Breast epithelium (tissue), 4 donors: ENCODE measurements at regions of chr1 and their contacts with region 1.

Region 1: GRCh38 chr1:29230553-29231378 is at the start of gene MECR:
- DNase-seq: peak; percentile 91 to 95
- H3K4me3 ChIP-seq: peak within 1 kb of the TSS; percentile 65 to 73 (median 71)
- H3K27ac ChIP-seq: peak within 1 kb of the TSS; percentile 70 to 83
- H3K4me1 ChIP-seq: peaks cover 0 to 4% of the 10 kb centered on the region in 2 donors
- H3K27me3 ChIP-seq: no peaks in the 10 kb centered on the region
- CTCF ChIP-seq: no peak
- POLR2A ChIP-seq: peak; percentile 42
- total RNA-seq, gene MECR: 21.0 to 23.3 (median 21.3) TPM

Region 2: DNA sequence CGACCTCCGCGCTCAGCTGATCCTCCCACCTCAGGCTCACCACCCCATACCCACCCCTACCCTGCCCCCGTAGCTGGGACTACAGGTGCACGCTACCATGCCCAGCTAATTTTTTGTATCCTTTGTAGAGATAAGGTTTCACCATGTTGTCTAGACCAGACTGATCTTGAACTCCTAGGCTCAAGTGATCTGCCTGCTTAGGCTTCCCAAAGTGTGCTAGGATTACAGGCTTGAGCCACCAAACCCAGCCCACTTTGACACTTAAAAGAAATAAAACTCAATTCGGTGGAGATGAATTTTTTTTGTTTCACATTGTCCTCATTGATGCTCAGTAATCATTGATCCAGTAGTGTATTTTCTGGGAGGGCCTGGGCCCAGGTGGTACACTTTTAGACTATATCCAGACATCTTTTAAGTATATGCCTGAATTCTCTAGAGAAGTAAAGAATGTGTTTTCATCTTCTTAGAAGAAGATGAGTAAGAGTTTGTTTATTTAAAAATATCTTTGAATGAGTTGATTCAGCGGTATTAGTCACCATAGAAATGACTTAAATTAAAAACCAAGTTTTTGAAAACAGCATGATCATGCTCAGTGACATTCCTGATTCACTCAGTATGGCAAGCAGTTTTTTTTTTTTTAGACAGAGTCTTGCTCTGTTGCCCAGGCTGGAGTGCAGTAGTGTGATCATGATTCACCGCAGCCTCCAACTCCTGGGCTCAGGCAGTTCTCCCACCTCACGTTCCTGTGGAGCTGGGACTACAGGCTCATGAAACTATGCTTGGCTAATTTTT is 258.6 kb before region 1 on chr1:
- intact Hi-C with region 1: no loop called
- DNase-seq: no peak
- H3K4me3 ChIP-seq: no peak overlapping the region
- H3K27ac ChIP-seq: peak overlapping the region; percentile 17 to 56
- H3K4me1 ChIP-seq: no peaks in the 10 kb centered on the region
- H3K27me3 ChIP-seq: no peaks in the 10 kb centered on the region
- CTCF ChIP-seq: no peak
- POLR2A ChIP-seq: no peak

Region 3: DNA sequence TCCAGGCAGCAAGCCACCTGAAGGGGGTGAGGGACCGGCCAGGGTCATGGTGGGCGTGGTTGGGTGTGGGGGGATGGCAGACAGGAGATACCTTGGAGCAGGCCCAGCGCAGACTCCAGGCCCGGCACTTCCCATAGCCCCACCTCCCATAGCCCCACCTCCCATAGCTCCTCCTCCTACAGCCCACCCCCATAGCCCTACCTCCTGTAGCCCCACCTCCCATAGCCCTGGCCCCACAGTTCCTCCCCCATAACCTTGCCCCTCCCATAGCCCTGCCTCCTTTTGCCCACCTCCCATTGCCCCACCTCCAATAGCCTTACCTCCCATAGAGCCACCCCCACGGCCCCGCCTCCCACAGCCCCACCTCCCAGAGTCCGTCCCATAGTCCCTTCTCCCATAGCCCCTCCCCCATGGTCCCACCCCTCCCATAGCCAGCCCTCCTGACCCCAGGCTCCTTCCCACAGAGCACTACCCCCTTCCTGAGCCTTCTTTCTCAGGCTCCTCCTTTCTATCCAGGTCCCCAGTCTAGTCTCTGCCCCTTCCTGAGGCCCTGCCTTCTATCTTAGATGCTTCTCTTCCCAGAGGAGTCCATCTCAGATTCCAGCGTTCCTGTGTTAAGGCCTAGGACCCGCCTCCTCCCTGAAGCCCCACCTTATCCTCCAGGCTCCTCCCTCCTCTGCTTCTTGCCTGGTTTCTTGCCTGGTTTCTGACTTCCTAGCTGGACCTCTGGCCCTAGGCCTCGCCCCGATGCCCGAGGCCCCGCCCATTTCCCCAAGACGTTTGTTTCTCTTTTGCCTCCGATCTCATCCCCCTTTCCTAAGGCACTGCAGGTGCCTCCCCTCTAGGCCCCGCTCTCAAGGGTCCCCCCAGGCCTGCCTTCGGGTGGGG is 52.4 kb after region 1 on chr1:
- intact Hi-C with region 1: no loop called
- DNase-seq: no peak
- H3K4me3 ChIP-seq: no peak overlapping the region
- H3K27ac ChIP-seq: no peak overlapping the region
- H3K4me1 ChIP-seq: no peaks in the 10 kb centered on the region
- H3K27me3 ChIP-seq: no peaks in the 10 kb centered on the region
- CTCF ChIP-seq: no peak
- POLR2A ChIP-seq: no peak

Region 4: DNA sequence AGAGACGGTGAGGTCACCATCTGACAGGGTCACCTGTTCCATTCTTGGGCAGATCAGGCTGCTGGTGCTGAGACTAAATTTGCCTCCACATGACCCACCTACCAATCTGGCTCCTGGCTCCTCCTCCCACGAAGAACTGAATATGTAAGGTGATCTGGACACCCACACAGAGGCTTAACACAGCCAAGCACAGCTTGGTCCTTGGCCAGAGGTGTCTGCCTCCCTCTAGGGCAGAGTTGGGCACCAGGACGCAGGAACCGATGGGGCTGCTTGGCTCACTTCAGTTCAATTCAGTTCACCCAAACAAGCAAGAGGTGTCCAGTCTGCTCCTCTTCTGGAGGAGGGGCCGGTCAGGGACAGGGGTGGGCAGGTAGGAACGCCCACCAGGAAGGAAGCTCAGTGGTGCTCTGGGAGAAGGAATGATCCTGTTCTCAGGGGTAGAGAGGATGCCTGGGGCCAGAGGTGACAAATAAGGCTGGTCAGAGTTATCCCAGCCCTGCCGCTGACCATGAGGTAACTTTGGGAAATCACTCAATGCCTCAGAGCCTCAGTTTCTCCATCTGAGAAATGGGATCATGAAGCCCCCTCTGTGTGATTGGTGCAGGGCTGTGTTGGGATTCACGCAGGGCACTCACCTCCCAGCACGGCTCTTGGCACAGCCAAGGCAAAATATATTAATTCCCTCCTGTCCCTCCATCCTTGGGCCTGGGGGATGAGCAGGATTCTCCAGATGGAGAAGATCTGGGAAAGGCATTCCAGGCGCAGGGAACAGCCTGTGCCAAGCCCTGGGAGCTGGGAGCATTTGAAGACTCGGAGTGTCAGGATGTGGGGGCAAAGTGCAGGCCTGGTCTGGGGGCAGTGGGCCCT is 290.0 kb after region 1 on chr1:
- intact Hi-C with region 1: no loop called
- DNase-seq: peak in 1 of 2 donors; percentile 43
- H3K4me3 ChIP-seq: no peak overlapping the region
- H3K27ac ChIP-seq: no peak overlapping the region
- H3K4me1 ChIP-seq: no peaks in the 10 kb centered on the region
- H3K27me3 ChIP-seq: peaks cover 0 to 29% of the 10 kb centered on the region in 2 donors
- CTCF ChIP-seq: no peak
- POLR2A ChIP-seq: no peak

Region 5: GRCh38 chr1:30085811-30086770 is 855.3 kb after region 1 on chr1:
- intact Hi-C with region 1: loop called (anchors 10 kb)
- DNase-seq: no peak
- H3K4me3 ChIP-seq: peak overlapping the region in 1 of 3 donors; percentile 55
- H3K27ac ChIP-seq: no peak overlapping the region
- H3K4me1 ChIP-seq: peaks cover 0 to 4% of the 10 kb centered on the region in 2 donors
- H3K27me3 ChIP-seq: peaks cover 0 to 7% of the 10 kb centered on the region in 2 donors
- CTCF ChIP-seq: peak in 2 of 3 donors; percentile 30 to 36
- POLR2A ChIP-seq: no peak